ENCODE measurements at regions of chr6 and their contacts with region 1.

Region 1: DNA sequence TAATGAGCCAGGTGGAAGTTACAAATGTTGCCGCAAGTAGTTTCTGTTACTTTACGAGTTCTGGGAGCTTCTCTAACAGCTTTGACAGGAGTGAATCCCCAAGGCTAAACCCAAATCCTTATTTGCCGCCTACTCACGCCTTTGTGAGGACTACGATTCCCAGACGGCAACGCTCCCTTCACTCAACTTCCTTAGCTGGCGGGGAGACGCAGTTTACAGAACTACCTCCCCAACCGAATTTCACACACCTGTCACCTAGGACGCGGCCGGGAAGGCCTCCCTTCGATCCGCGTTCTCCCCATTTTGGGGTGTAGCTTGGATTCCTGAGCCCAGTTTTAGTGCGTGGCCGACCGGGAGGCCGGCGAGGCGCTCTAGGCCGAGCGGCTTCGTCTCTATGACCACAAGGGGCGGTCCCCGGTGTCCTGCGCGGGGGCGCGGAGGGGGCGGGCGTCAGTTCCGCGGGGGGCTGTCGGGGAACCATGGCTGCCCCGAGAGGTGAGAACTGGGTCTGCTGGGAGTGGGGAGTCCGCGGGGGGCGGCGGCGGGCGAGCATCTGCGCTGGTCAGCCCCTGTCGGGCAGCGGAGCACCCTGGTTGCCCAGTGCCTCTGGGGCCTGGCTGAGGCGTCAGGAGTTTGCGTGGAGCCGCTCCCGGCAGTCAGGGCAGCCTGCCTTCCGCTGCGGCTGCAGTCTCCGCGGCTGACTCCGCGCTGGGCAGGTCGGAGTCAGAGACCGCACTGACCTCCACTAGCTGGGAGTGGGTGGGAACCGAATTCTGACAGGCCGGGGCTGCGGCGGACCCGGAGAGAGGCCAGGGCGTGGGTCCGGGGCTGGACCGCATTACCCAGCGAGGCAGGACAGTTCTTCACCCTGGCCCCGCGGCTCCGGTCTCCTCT is at the start of gene SLC35A1:
- DNase-seq: peak; percentile 86
- H3K4me3 ChIP-seq: peak within 1 kb of the TSS; percentile 74
- H3K27ac ChIP-seq: peak within 1 kb of the TSS; percentile 35
- H3K4me1 ChIP-seq: peaks cover 25% of the 10 kb centered on the region
- CTCF ChIP-seq: 0 out of 2 replicates have a peak, but pooled peaks have one; percentile 27
- total RNA-seq, gene SLC35A1: 17.0 and 17.2 TPM in 2 replicates

Region 2: GRCh38 chr6:87154993-87155841 is 317.6 kb before region 1 on chr6 and contains the start of gene ZNF292:
- CTCF ChIA-PET with region 1: no interaction called
- POLR2A ChIA-PET with region 1: no interaction called
- intact Hi-C with region 1: loop called (anchors 2 kb)
- DNase-seq: peak; percentile 99
- H3K4me3 ChIP-seq: peak within 1 kb of the TSS; percentile 81
- H3K27ac ChIP-seq: peak within 1 kb of the TSS; percentile 83
- H3K4me1 ChIP-seq: peaks cover 37% of the 10 kb centered on the region
- CTCF ChIP-seq: 0 out of 2 replicates have a peak, but pooled peaks have one; percentile 27
- total RNA-seq, gene ZNF292: 17.5 and 18.7 TPM in 2 replicates

Region 3: DNA sequence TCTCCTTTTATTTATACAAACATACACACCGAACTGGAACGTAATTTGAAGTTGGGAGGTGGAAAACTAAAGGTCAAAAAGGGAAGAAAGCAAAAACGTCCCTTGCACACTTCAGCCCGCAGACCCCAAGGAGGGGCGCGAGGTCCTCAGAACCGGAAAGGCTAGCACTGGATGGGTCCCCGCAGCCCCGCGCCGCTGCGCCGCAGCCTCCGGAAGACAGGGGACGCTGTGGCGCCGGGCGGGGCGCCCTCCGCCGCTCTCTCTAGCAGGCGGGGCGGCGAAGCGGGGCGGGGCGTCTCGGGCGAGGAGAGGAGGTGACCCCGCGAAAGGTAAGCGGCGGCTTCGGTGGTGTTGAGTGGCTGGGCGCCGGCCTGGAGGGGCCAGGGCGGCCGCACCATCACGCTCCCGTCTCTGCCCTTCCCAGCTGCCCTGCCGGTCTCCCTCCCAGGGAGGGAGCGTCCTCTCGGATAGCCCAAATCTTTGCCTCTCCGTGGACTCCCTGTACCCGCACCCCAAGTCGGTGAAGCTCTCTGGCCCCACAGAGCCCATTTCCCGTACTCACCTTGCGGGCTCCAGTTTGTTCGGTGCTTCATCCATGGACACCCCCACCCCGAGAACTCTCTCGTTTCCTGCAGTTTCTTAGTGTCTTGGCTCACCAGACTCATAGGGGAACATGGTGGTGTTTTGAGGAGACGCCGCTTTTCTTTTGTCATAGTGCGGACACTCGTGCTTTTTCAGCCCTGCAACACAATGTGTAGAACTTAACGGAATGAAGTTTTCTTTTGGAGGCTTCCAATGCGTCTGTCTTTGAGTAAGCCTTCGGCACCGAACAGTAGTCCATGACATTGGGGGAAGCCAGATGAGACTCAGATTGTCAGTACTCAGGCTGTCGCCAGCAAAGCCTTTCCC is 150.2 kb before region 1 on chr6 and contains the start of gene SMIM8:
- CTCF ChIA-PET with region 1: no interaction called
- POLR2A ChIA-PET with region 1: no interaction called
- intact Hi-C with region 1: loop called (anchors 1 kb)
- DNase-seq: peak; percentile 88
- H3K4me3 ChIP-seq: peak within 1 kb of the TSS; percentile 92
- H3K27ac ChIP-seq: no peak within 1 kb of the TSS
- H3K4me1 ChIP-seq: peaks cover 6% of the 10 kb centered on the region
- CTCF ChIP-seq: peak; percentile 92
- total RNA-seq, gene SMIM8: 6.6 TPM in 2 replicates

Region 4: DNA sequence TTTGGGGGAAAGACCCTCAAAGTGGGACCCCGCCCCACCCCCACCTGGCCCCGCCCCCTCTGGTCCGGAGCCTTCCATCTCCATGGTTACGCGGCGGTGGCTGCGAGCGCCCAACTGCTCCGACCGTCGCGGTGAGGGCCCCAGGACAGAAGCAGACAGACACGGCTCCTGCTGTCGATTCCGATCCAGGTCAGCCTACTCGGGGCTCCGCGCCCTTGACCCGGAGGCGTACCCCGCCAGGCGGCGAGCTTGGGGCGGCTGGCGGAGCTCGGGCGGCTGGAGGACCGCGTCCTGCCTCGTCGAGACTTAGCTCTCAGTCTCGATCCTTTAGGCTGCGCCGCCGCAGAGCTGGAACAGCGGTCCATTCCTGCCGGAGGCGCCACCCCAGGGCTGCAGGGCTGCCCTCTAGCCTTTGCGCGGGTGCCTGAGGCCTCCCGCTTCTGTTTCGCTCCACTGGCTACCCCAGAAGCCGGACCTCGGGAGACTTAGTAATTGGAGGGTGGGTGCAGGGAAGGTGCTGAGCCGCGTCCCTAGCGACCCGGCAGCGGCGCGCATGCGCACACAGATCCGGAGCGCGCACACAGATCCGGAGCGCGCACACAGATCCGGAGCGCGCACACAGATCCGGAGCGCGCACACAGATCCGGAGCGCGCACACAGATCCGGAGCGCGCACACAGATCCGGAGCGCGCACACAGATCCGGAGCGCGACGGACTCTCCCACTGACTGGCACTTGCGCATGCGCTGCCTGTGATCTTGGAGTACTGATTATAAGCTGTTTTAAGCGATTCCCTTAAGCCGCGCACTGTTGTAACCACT is 64.7 kb before region 1 on chr6 and contains the start of gene CFAP206:
- CTCF ChIA-PET with region 1: no interaction called
- POLR2A ChIA-PET with region 1: interaction called, 3 read pairs
- intact Hi-C with region 1: loop called (anchors 2 kb)
- DNase-seq: peak; percentile 90
- H3K4me3 ChIP-seq: peak within 1 kb of the TSS; percentile 85
- H3K27ac ChIP-seq: peak within 1 kb of the TSS; percentile 50
- H3K4me1 ChIP-seq: peaks cover 5% of the 10 kb centered on the region
- CTCF ChIP-seq: 0 out of 2 replicates have a peak, but pooled peaks have one; percentile 36
- total RNA-seq, gene CFAP206: 0.19 TPM in 1 of 2 replicates, not detected in the other

Region 5: DNA sequence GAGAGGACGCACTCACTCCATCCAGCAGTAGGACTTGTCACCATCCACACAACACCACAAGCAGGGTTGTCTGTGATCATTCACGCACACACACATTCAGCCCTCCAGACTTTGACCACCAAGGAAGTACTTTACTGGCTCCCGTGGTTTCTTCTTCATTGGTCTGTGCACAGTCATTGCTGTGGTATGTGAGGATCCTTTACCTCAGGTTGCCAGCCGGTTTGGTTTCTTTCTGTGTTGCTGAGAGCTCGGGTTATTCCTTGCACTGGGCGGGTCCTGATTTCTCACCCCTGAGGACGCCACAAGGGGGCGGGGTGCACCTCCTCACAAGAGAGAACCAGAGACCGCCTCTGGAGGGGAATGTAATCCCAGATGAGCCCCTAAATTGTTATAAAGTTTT is 11.2 kb after region 1 on chr6:
- CTCF ChIA-PET with region 1: no interaction called
- POLR2A ChIA-PET with region 1: no interaction called
- intact Hi-C with region 1: no loop called
- DNase-seq: peak; percentile 57
- H3K4me3 ChIP-seq: no peak overlapping the region
- H3K27ac ChIP-seq: no peak overlapping the region
- H3K4me1 ChIP-seq: no peaks in the 10 kb centered on the region
- CTCF ChIP-seq: peak; percentile 80

Region 6: GRCh38 chr6:87555506-87555905 is 82.7 kb after region 1 on chr6:
- CTCF ChIA-PET with region 1: no interaction called
- POLR2A ChIA-PET with region 1: no interaction called
- intact Hi-C with region 1: no loop called
- DNase-seq: no peak
- H3K4me3 ChIP-seq: no peak overlapping the region
- H3K27ac ChIP-seq: no peak overlapping the region
- H3K4me1 ChIP-seq: no peaks in the 10 kb centered on the region
- CTCF ChIP-seq: no peak

Measured in OCI-LY7 (cell line).